ENCODE measurements at regions of chr4 and their contacts with region 1.

Region 1: DNA sequence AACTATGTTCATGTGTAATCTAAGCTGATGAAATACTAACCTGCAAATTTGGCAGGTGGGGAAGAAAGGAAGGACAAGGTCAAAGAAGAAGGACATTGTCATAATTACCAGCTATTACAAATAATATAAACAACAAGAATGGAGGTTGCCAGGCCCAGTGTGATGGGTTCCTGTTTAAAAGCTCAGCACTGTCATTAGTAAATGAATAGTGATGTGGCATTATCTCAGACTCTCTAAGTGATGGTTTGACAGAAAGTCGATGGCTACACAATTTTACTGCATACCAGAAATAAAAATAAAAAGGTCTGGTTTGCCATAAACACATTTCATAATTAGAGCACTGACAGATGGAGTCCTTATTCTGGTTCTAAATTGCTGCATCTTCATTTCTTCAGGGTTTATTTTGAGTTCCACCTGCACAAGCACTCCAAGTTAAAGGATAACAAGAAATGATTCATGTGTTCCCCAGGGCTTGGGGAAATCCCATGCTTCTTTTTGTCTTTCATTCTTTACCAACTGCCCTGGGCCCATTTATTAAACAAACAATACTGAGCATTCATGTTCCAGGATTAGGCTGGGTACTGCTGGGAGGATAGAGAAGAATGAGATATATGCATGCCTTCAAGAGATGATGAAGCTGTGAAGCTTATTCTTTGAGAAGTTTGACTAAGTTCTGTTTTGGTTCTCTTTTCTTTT is 367.8 kb upstream of the RASGEF1B start:
- DNase-seq: no peak
- ATAC-seq: no peak
- H3K4me3 ChIP-seq: no peak overlapping the region
- H3K27ac ChIP-seq: no peak overlapping the region
- H3K4me1 ChIP-seq: peaks cover 0 to 2% of the 10 kb centered on the region in 2 experiments; a peak in 1 of 5 replicates
- H3K27me3 ChIP-seq: no peaks in the 10 kb centered on the region
- CTCF ChIP-seq: no peak
- EP300 ChIP-seq: no peak
- POLR2A ChIP-seq: no peak
- RAD21 ChIP-seq: no peak

Region 2: GRCh38 chr4:81412946-81413495 is 426.5 kb before region 1 on chr4:
- CTCF ChIA-PET with region 1: no interaction called
- POLR2A ChIA-PET with region 1: no interaction called
- in situ Hi-C with region 1: loop called (anchors 10 kb)
- intact Hi-C with region 1: no loop called
- DNase-seq: no peak
- ATAC-seq: no peak
- H3K4me3 ChIP-seq: no peak overlapping the region
- H3K27ac ChIP-seq: no peak overlapping the region
- H3K4me1 ChIP-seq: peaks cover 0 to 28% of the 10 kb centered on the region in 2 experiments; a peak in 4 of 5 replicates
- H3K27me3 ChIP-seq: no peaks in the 10 kb centered on the region
- CTCF ChIP-seq: no peak
- EP300 ChIP-seq: no peak
- POLR2A ChIP-seq: no peak
- RAD21 ChIP-seq: no peak

Measured in K562 (cell line).